ENCODE measurements at regions of chr15 and their contacts with region 1.

Region 1: GRCh38 chr15:47987908-47988532 is 132.8 kb upstream of the SLC24A5 start:
- DNase-seq: peak; percentile 40
- H3K4me3 Mint-ChIP-seq: no peak overlapping the region
- H3K27ac Mint-ChIP-seq: no peak overlapping the region
- H3K4me1 Mint-ChIP-seq: no peaks in the 10 kb centered on the region
- H3K27me3 Mint-ChIP-seq: peaks cover 3% of the 10 kb centered on the region

Region 2: GRCh38 chr15:46312133-46312740 is 1675.8 kb before region 1 on chr15:
- CTCF ChIA-PET with region 1: no interaction called
- intact Hi-C with region 1: loop called (anchors 2 kb)
- DNase-seq: peak; percentile 78
- H3K4me3 Mint-ChIP-seq: no peak overlapping the region
- H3K27ac Mint-ChIP-seq: no peak overlapping the region
- H3K4me1 Mint-ChIP-seq: no peaks in the 10 kb centered on the region
- H3K27me3 Mint-ChIP-seq: no peaks in the 10 kb centered on the region

Region 3: DNA sequence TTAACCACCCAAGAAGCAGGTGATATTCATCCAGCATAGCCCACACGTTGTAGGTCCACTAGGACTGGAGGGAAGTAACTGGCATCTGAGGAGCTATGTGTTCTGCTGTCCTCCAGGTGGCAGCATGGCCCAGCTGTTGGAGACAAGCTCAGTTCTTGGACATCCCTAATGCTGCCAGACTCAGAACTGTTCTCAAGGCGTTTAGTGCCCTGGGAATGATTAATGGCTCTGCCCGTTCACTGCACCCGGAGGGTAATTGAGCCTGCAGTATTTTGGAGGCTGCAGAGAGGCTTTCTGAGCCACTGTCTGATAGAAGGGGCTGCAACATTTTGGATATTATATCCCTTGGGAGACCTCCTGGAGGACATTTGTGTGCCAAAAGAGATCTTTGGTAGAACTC is 792.0 kb before region 1 on chr15:
- CTCF ChIA-PET with region 1: interaction called, 19 read pairs
- intact Hi-C with region 1: loop called (anchors 1 kb)
- DNase-seq: peak; percentile 67
- H3K4me3 Mint-ChIP-seq: no peak overlapping the region
- H3K27ac Mint-ChIP-seq: no peak overlapping the region
- H3K4me1 Mint-ChIP-seq: no peaks in the 10 kb centered on the region
- H3K27me3 Mint-ChIP-seq: peaks cover 18% of the 10 kb centered on the region

Region 4: GRCh38 chr15:47473832-47474231 is 514.2 kb before region 1 on chr15:
- CTCF ChIA-PET with region 1: no interaction called
- intact Hi-C with region 1: loop called (anchors 5 kb)
- DNase-seq: no peak
- H3K4me3 Mint-ChIP-seq: no peak overlapping the region
- H3K27ac Mint-ChIP-seq: no peak overlapping the region
- H3K4me1 Mint-ChIP-seq: no peaks in the 10 kb centered on the region
- H3K27me3 Mint-ChIP-seq: peaks cover 1% of the 10 kb centered on the region

Region 5: DNA sequence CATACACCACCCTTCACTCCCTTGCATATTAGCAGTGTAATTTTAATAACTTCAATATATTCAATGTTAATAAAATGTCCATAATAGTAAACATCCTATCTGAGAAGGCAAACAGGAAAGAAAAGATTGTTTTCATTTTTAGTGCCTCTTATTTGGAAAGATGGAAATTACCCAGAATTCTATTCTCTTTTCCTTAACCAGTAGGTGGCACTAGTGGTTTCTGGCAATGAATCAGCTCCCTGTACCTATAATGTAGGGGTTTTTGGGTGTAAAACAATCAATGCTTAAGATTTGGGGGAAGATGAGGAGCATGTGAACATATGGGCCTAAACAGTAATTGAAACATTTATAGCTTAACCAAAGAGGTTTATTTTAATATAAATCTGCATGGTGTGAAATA is 276.4 kb before region 1 on chr15:
- CTCF ChIA-PET with region 1: interaction called, 5 read pairs
- intact Hi-C with region 1: loop called (anchors 5 kb)
- DNase-seq: no peak
- H3K4me3 Mint-ChIP-seq: no peak overlapping the region
- H3K27ac Mint-ChIP-seq: no peak overlapping the region
- H3K4me1 Mint-ChIP-seq: no peaks in the 10 kb centered on the region
- H3K27me3 Mint-ChIP-seq: peaks cover 27% of the 10 kb centered on the region

Region 6: DNA sequence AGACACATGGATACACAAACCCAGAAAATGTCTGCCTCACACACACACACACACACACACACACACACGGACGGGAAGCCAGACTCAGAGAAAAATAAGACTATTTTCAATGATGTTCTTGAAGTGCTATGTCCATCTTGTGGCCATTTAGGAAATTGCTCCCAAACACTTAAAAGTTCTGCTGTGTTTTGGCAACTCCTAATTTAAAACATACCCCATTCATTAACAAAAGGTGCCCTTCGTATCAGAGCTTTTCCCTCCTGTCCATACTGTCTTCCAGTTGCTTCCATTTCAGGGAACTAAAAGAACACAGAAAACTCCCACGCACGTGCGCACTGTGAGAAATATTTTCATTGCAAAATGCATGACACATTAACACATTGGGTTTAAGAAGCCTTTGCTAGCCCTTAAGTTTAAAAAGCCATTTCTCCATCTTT is 262.6 kb after region 1 on chr15:
- CTCF ChIA-PET with region 1: interaction called, 3 read pairs
- intact Hi-C with region 1: loop called (anchors 1 kb)
- DNase-seq: peak; percentile 25
- H3K4me3 Mint-ChIP-seq: no peak overlapping the region
- H3K27ac Mint-ChIP-seq: no peak overlapping the region
- H3K4me1 Mint-ChIP-seq: no peaks in the 10 kb centered on the region
- H3K27me3 Mint-ChIP-seq: peaks cover 16% of the 10 kb centered on the region

Measured in activated naive CD4-positive, alpha-beta T cell treated with anti-CD3 and anti-CD28 coated beads for 36 hours (primary cell).